ENCODE measurements at regions of chr16 and their contacts with region 1.

Region 1: GRCh38 chr16:4232541-4233386 is 9.1 kb downstream of the SRL start:
- DNase-seq: no peak
- H3K4me3 ChIP-seq: no peak overlapping the region
- H3K4me3 Mint-ChIP-seq: no peak overlapping the region
- H3K27ac ChIP-seq: no peak overlapping the region
- H3K27ac Mint-ChIP-seq: no peak overlapping the region
- H3K4me1 ChIP-seq: no peaks in the 10 kb centered on the region
- H3K4me1 Mint-ChIP-seq: peaks cover 2% of the 10 kb centered on the region
- H3K27me3 ChIP-seq: no peaks in the 10 kb centered on the region
- H3K27me3 Mint-ChIP-seq: peaks cover 6 to 10% (median 7%) of the 10 kb centered on the region in 3 donors
- CTCF ChIP-seq: no peak

Region 2: GRCh38 chr16:3922276-3922675 is 310.5 kb before region 1 on chr16:
- intact Hi-C with region 1: loop called in 1 of 2 experiments (anchors 10 kb)
- DNase-seq: no peak
- H3K4me3 ChIP-seq: no peak overlapping the region
- H3K4me3 Mint-ChIP-seq: no peak overlapping the region
- H3K27ac ChIP-seq: no peak overlapping the region
- H3K27ac Mint-ChIP-seq: no peak overlapping the region
- H3K4me1 ChIP-seq: no peaks in the 10 kb centered on the region
- H3K4me1 Mint-ChIP-seq: no peaks in the 10 kb centered on the region
- H3K27me3 ChIP-seq: peaks cover 0 to 6% of the 10 kb centered on the region in 2 donors
- H3K27me3 Mint-ChIP-seq: peaks cover 6 to 29% (median 11%) of the 10 kb centered on the region in 3 donors
- CTCF ChIP-seq: no peak